ENCODE measurements at regions of chr3 and their contacts with region 1.

Region 1: DNA sequence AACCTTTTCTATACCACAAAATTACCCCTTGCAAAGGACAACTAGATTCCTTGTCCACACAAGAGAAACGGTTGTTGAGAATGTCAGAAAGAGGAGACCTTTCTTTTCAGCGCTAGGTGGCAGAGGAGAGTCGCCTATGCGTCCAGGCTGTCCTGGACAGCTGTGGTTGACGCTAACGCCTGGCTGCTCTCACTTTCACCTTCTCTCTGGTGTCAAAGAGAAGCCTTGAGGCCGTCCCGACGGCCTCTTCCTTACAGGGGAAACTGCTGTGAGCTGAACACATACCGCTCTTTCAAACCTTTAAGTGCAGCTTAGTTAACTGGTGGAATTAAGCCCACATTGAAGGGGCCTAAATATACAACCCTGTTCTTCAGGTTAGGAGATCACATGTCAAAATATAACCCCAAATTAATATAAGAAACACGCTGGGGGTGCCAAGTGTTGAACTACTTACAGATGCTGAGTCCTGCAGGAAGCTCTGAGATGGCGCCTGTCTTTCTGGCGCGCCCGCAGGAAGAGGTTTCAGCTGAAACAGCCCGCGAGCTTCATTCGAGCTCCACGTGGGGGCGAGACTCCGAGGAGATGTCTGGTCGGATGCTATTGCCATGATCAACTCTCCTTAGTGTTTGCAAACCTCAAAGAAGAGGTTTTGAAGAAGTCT is 26.1 kb upstream of the KBTBD8 start:
- DNase-seq: no peak
- H3K4me3 ChIP-seq: peak overlapping the region; percentile 34
- H3K27me3 ChIP-seq: peaks cover 2% of the 10 kb centered on the region
- CTCF ChIP-seq: peak; percentile 91

Region 2: GRCh38 chr3:66952357-66952756 is 19.7 kb before region 1 on chr3:
- CTCF ChIA-PET with region 1: interaction called, 11 read pairs
- POLR2A ChIA-PET with region 1: no interaction called
- DNase-seq: no peak
- H3K4me3 ChIP-seq: no peak overlapping the region
- H3K27me3 ChIP-seq: 0 out of 2 replicates have a peak, but pooled peaks cover 1% of the 10 kb centered on the region
- CTCF ChIP-seq: no peak

Region 3: DNA sequence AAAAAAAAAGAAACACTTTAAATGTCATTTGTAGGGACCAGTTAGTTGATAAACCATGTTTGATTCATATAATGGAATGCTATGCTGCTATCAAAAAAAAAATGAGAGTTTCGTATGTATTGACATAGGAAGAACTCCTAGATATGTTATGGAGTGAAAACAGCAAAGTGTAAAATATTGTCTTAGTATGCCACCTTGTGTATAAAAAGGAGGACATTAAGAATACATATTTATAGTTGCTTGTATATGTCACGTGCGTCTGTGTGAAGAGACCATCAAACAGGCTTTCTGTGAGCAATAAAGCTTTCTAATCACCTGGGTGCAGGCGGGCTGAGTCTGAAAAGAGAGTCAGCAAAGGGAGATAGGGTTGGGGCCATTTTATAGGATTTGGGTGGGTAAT is 65.6 kb after region 1 on chr3:
- CTCF ChIA-PET with region 1: interaction called, 10 read pairs
- POLR2A ChIA-PET with region 1: no interaction called
- DNase-seq: no peak
- H3K4me3 ChIP-seq: no peak overlapping the region
- H3K27me3 ChIP-seq: no peaks in the 10 kb centered on the region
- CTCF ChIP-seq: no peak

Region 4: DNA sequence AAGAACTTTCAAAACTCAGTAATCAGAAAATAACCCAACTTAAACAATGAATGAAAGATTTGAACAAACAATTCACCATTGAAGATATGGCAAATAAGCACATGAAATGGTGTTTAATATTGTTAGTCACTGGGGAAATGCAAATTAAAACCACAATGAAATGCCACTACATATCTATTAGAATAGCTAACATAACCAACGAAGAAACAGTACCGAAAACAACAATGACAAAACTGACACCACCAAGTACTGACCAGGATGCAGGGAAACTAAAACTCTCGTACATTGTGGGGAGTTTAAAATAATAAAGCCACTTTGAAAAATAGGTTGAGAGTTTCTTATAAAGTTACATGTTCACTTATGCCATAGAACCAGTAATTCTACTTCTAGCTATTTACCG is 95.2 kb after region 1 on chr3:
- CTCF ChIA-PET with region 1: no interaction called
- POLR2A ChIA-PET with region 1: no interaction called
- DNase-seq: no peak
- H3K4me3 ChIP-seq: no peak overlapping the region
- H3K27me3 ChIP-seq: no peaks in the 10 kb centered on the region
- CTCF ChIP-seq: no peak

Region 5: GRCh38 chr3:68876112-68876713 is 1904.2 kb after region 1 on chr3:
- CTCF ChIA-PET with region 1: interaction called, 48 read pairs
- POLR2A ChIA-PET with region 1: no interaction called
- DNase-seq: peak; percentile 15
- H3K4me3 ChIP-seq: no peak overlapping the region
- H3K27me3 ChIP-seq: no peaks in the 10 kb centered on the region; the same call in 1 of the 2 replicates
- CTCF ChIP-seq: peak; percentile 84